GM12878 (cell line): ENCODE measurements at regions of chr9 and their contacts with region 1.

Region 1: DNA sequence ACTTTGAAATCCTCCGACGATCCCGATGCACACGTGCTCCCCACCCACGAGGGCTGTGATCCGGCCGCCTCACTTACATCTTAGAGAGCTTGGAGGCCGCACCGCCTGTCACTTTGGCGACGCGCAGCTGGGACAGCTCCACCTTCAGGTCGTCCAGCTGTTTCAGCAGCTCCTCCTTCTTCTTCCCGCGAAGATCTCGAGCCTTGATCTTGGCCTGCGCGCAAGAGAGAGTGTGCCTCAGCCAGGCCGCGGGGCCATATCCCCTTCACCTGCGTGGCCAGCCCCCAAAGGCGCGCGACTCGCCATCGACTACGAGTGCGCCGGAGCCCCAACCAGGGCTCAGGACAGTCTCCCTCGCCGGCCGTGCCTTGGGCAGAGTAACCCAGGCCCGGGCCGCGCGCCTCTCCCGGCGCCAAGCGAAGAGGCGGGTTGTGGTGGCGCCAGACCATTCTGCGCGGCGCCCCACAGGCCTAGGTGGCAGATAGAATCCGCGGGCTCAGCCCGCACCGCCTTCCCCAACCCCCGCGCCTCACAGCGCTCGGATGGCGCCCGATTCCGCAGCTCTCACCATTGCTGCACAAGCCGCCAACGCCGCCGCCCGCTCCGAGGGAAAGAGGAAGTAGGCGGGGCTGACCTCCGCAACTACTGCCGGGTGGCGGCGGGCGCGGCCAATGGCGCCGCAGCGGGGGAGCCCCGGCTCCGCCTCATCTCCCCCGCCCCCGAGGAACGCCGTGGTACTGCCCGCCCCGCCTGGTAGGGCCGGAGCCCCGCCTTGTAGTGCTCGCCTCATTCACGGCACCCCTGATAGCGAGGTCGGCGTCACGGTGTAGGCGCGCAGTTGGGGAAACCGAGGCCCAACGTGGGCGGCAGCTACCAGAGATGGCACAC is at the starts of genes ARPC5L and RPL35:
- DNase-seq: peak; percentile 80
- ATAC-seq: peak; percentile 95
- H3K4me3 ChIP-seq: peak within 1 kb of the TSS; percentile 95
- H3K27ac ChIP-seq: peak within 1 kb of the TSS; percentile 83
- H3K4me1 ChIP-seq: peaks cover 13% of the 10 kb centered on the region
- H3K27me3 ChIP-seq: no peaks in the 10 kb centered on the region
- CTCF ChIP-seq: peak; percentile 5 to 16 (median 15); a peak in 2 of 6 replicates
- EP300 ChIP-seq: no peak
- POLR2A ChIP-seq: peak; percentile 99
- RAD21 ChIP-seq: no peak
- polyA plus RNA-seq, gene ARPC5L: 42.3 to 121 TPM
- polyA plus RNA-seq, gene RPL35: 5,281 to 6,300 TPM

Region 2: GRCh38 chr9:124894741-124895170 is 33.2 kb after region 1 on chr9:
- CTCF ChIA-PET with region 1: interaction called, 45 read pairs
- POLR2A ChIA-PET with region 1: no interaction called
- RAD21 ChIA-PET with region 1: interaction called, 4 read pairs
- SMC1A ChIA-PET with region 1: interaction called, 4 read pairs
- in situ Hi-C with region 1: no loop called
- intact Hi-C with region 1: no loop called
- DNase-seq: no peak
- ATAC-seq: peak; percentile 91
- H3K4me3 ChIP-seq: no peak overlapping the region
- H3K27ac ChIP-seq: no peak overlapping the region
- H3K4me1 ChIP-seq: no peaks in the 10 kb centered on the region
- H3K27me3 ChIP-seq: no peaks in the 10 kb centered on the region
- CTCF ChIP-seq: peak; percentile 57 to 71 (median 58); a peak in 5 of 6 replicates
- EP300 ChIP-seq: no peak
- POLR2A ChIP-seq: no peak
- RAD21 ChIP-seq: peak; percentile 78

Region 3: DNA sequence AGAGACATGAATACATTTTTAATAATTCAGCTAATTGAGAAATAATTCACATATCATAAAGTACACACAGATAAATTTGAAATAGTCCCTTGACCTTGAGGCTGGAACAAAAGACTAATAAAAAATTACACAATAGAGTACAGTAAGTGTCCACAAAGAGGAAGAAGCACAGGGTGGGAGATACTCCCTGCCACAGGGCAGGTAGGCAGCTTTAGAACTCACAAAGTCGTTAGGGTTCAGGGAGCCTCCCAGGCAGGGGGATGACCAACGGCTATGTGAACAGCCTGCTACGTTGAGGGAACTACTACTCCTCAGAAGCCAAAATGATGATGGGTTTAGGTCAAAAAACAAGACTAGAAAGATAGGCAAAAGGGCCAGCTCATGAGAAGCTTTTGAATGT is 47.0 kb after region 1 on chr9:
- CTCF ChIA-PET with region 1: no interaction called
- POLR2A ChIA-PET with region 1: no interaction called
- RAD21 ChIA-PET with region 1: no interaction called
- SMC1A ChIA-PET with region 1: no interaction called
- in situ Hi-C with region 1: no loop called
- intact Hi-C with region 1: no loop called
- DNase-seq: no peak
- ATAC-seq: no peak
- H3K4me3 ChIP-seq: no peak overlapping the region
- H3K27ac ChIP-seq: no peak overlapping the region
- H3K4me1 ChIP-seq: no peaks in the 10 kb centered on the region
- H3K27me3 ChIP-seq: no peaks in the 10 kb centered on the region
- CTCF ChIP-seq: no peak
- EP300 ChIP-seq: no peak
- POLR2A ChIP-seq: no peak
- RAD21 ChIP-seq: no peak

Region 4: DNA sequence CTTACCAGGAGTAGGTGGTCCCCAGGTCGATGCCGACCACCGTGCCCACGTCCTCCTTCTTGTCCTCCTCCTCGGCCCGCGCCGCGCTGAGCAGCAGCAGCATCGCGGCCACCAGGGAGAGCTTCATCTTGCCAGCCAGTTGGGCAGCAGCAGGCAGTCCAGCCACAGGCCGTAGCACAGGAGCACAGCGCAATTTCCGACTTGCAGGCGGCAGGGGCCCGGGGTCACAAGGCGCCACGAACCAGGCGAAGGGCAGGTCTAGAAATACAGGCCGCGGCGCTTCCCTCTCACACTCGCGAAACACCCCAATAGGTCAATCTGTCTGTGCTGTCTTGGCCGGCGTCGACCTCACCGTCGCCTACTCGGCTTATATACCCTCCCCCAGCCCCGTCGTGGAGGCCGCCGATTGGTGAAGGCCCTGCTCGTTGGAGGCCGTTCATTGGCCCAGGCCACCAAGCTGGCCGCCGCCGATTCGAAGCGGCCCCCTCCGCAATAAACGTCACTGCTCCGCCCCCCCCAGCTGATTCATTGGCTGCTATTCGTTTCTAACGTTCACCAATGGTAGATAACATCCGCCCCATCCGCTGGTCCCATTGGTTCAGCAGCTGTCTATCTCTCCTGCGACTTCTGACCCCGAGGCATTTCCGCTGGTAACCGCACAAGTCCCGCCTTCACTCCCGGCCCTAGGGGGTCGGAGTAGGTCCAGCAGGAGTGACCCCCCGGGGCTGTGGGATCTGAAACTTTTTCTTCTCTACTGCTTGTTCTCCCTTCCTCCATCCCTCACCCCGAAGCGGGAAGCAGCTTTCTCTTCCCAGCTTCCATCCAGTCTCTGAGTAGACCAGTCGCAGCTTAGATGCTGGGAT is 379.6 kb after region 1 on chr9 and contains the start of gene HSPA5:
- CTCF ChIA-PET with region 1: no interaction called
- POLR2A ChIA-PET with region 1: interaction called, 3 read pairs
- RAD21 ChIA-PET with region 1: no interaction called
- SMC1A ChIA-PET with region 1: no interaction called
- in situ Hi-C with region 1: no loop called
- intact Hi-C with region 1: loop called (anchors 5 kb)
- DNase-seq: peak; percentile 99
- ATAC-seq: peak; percentile 95
- H3K4me3 ChIP-seq: peak within 1 kb of the TSS; percentile 95
- H3K27ac ChIP-seq: peak within 1 kb of the TSS; percentile 99
- H3K4me1 ChIP-seq: peaks cover 6% of the 10 kb centered on the region
- H3K27me3 ChIP-seq: no peaks in the 10 kb centered on the region
- CTCF ChIP-seq: 0 out of 6 replicates have a peak, but pooled peaks of 1 of the 3 experiments have one; percentile 2
- EP300 ChIP-seq: no peak
- POLR2A ChIP-seq: peak; percentile 97
- RAD21 ChIP-seq: no peak
- polyA plus RNA-seq, gene HSPA5: 39.8 to 105 TPM

Region 5: GRCh38 chr9:125374443-125375309 is 513.1 kb after region 1 on chr9:
- CTCF ChIA-PET with region 1: interaction called, 3 read pairs
- POLR2A ChIA-PET with region 1: no interaction called
- RAD21 ChIA-PET with region 1: interaction called, 3 read pairs
- SMC1A ChIA-PET with region 1: no interaction called
- in situ Hi-C with region 1: no loop called
- intact Hi-C with region 1: loop called (anchors 10 kb)
- DNase-seq: peak; percentile 16
- ATAC-seq: peak; percentile 98
- H3K4me3 ChIP-seq: no peak overlapping the region
- H3K27ac ChIP-seq: no peak overlapping the region
- H3K4me1 ChIP-seq: 0 out of 2 replicates have a peak, but pooled peaks cover 3% of the 10 kb centered on the region
- H3K27me3 ChIP-seq: peaks cover 0 to 2% of the 10 kb centered on the region in 2 experiments; a peak in 1 of 4 replicates
- CTCF ChIP-seq: peak; percentile 82 to 87 (median 83)
- EP300 ChIP-seq: no peak
- POLR2A ChIP-seq: no peak
- RAD21 ChIP-seq: peak; percentile 100